ENCODE measurements at regions of chr6 and their contacts with region 1.

Region 1: GRCh38 chr6:48765352-48765961 is 654.5 kb upstream of the PTCHD4 start:
- DNase-seq: peak; percentile 78
- H3K4me3 ChIP-seq: no peak overlapping the region
- H3K27ac ChIP-seq: no peak overlapping the region
- H3K4me1 ChIP-seq: peaks cover 6% of the 10 kb centered on the region
- H3K27me3 ChIP-seq: no peaks in the 10 kb centered on the region
- CTCF ChIP-seq: peak; percentile 70

Region 2: GRCh38 chr6:47787620-47788497 is 977.6 kb before region 1 on chr6:
- CTCF ChIA-PET with region 1: interaction called, 6 read pairs
- POLR2A ChIA-PET with region 1: no interaction called
- intact Hi-C with region 1: loop called (anchors 1 kb)
- DNase-seq: peak; percentile 61
- H3K4me3 ChIP-seq: no peak overlapping the region
- H3K27ac ChIP-seq: no peak overlapping the region
- H3K4me1 ChIP-seq: no peaks in the 10 kb centered on the region
- H3K27me3 ChIP-seq: peaks cover 28% of the 10 kb centered on the region
- CTCF ChIP-seq: peak; percentile 94

Region 3: GRCh38 chr6:48426636-48427035 is 338.8 kb before region 1 on chr6:
- CTCF ChIA-PET with region 1: no interaction called
- POLR2A ChIA-PET with region 1: no interaction called
- intact Hi-C with region 1: loop called (anchors 10 kb)
- DNase-seq: no peak
- H3K4me3 ChIP-seq: no peak overlapping the region
- H3K27ac ChIP-seq: no peak overlapping the region
- H3K4me1 ChIP-seq: peaks cover 19% of the 10 kb centered on the region
- H3K27me3 ChIP-seq: no peaks in the 10 kb centered on the region
- CTCF ChIP-seq: no peak

Region 4: DNA sequence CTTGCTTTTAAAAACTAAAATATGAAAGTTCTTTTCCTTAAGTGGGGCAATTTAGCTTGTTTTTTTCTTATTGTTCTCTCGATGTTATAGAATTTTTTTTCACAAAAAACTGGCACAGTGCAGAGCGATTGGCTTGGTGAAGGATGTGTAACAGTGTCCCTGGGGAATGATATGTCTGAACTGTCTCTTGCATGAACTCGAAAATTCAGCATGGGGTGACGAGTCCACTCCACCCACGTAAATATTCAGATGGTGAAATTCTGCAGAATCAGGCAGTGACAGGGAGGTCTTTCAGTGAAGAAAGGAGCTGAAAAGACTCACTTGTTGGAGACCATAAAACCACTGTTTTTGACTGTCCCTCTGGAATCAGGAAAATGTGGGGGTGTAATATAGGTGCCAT is 192.3 kb after region 1 on chr6:
- CTCF ChIA-PET with region 1: no interaction called
- POLR2A ChIA-PET with region 1: no interaction called
- intact Hi-C with region 1: no loop called
- DNase-seq: peak; percentile 21
- H3K4me3 ChIP-seq: no peak overlapping the region
- H3K27ac ChIP-seq: no peak overlapping the region
- H3K4me1 ChIP-seq: peaks cover 14% of the 10 kb centered on the region
- H3K27me3 ChIP-seq: no peaks in the 10 kb centered on the region
- CTCF ChIP-seq: no peak

Region 5: DNA sequence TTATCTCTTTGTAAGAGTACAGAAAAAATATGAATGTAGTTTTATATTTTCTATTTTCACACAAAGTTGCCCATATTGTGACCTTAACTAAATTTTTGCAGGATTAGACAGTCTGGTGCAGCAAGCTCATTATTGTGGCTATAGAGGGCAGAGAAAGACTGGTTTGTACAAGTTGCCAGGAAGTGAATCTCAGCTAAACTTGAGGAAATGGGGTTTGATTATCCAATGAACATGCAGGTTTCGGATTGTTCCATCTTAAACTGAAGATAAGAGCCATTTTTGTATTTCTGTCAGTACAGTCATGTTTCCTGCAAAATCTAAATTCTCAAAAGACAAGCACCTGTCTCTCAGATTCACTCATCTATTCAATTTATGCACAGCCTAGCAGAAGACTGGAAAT is 306.7 kb after region 1 on chr6:
- CTCF ChIA-PET with region 1: no interaction called
- POLR2A ChIA-PET with region 1: no interaction called
- intact Hi-C with region 1: loop called (anchors 5 kb)
- DNase-seq: peak; percentile 66
- H3K4me3 ChIP-seq: no peak overlapping the region
- H3K27ac ChIP-seq: peak overlapping the region; percentile 95
- H3K4me1 ChIP-seq: peaks cover 5% of the 10 kb centered on the region
- H3K27me3 ChIP-seq: no peaks in the 10 kb centered on the region
- CTCF ChIP-seq: no peak; the same call in 1 of the 2 replicates

Region 6: GRCh38 chr6:49849213-49849907 is 1083.9 kb after region 1 on chr6:
- CTCF ChIA-PET with region 1: no interaction called
- POLR2A ChIA-PET with region 1: no interaction called
- intact Hi-C with region 1: loop called (anchors 10 kb)
- DNase-seq: peak; percentile 83
- H3K4me3 ChIP-seq: no peak overlapping the region
- H3K27ac ChIP-seq: no peak overlapping the region
- H3K4me1 ChIP-seq: no peaks in the 10 kb centered on the region
- H3K27me3 ChIP-seq: no peaks in the 10 kb centered on the region
- CTCF ChIP-seq: peak; percentile 62